ENCODE measurements at regions of chr4 and their contacts with region 1.

Region 1: GRCh38 chr4:781493-782216 is 44.3 kb downstream of the CPLX1 start:
- DNase-seq: peak; percentile 99 to 100
- H3K4me3 ChIP-seq: peak overlapping the region; percentile 85 to 95
- H3K27ac ChIP-seq: peak overlapping the region; percentile 85 to 88
- H3K4me1 ChIP-seq: peaks cover 4 to 49% (median 33%) of the 10 kb centered on the region in 4 donors
- H3K27me3 ChIP-seq: peaks cover 5 to 25% of the 10 kb centered on the region in 2 donors
- CTCF ChIP-seq: no peak

Region 2: GRCh38 chr4:674172-675035 is 107.3 kb before region 1 on chr4 and contains the starts of genes ATP5ME and MYL5:
- intact Hi-C with region 1: loop called (anchors 10 kb)
- DNase-seq: peak; percentile 95 to 98
- H3K4me3 ChIP-seq: peak within 1 kb of the TSS; percentile 94 to 97
- H3K27ac ChIP-seq: peak within 1 kb of the TSS; percentile 96 to 97
- H3K4me1 ChIP-seq: peaks cover 0 to 34% (median 17%) of the 10 kb centered on the region in 4 donors
- H3K27me3 ChIP-seq: peaks cover 0 to 33% of the 10 kb centered on the region in 2 donors
- CTCF ChIP-seq: peak; percentile 87 to 89

Region 3: GRCh38 chr4:705278-706082 is 76.2 kb before region 1 on chr4 and contains the start of gene PCGF3:
- intact Hi-C with region 1: loop called (anchors 10 kb)
- DNase-seq: peak; percentile 94 to 97
- H3K4me3 ChIP-seq: peak within 1 kb of the TSS; percentile 92 to 99
- H3K27ac ChIP-seq: peak within 1 kb of the TSS; percentile 86 to 93
- H3K4me1 ChIP-seq: peaks cover 0 to 35% (median 26%) of the 10 kb centered on the region in 4 donors
- H3K27me3 ChIP-seq: no peaks in the 10 kb centered on the region
- CTCF ChIP-seq: no peak

Region 4: GRCh38 chr4:931960-932712 is 150.5 kb after region 1 on chr4 and contains the starts of genes GAK and TMEM175:
- intact Hi-C with region 1: loop called (anchors 10 kb)
- DNase-seq: peak; percentile 94 to 97
- H3K4me3 ChIP-seq: peak within 1 kb of the TSS; percentile 99 to 100
- H3K27ac ChIP-seq: peak within 1 kb of the TSS; percentile 86 to 95
- H3K4me1 ChIP-seq: peaks cover 0 to 50% (median 34%) of the 10 kb centered on the region in 4 donors
- H3K27me3 ChIP-seq: no peaks in the 10 kb centered on the region
- CTCF ChIP-seq: peak in 1 of 2 experiments; percentile 20

Region 5: DNA sequence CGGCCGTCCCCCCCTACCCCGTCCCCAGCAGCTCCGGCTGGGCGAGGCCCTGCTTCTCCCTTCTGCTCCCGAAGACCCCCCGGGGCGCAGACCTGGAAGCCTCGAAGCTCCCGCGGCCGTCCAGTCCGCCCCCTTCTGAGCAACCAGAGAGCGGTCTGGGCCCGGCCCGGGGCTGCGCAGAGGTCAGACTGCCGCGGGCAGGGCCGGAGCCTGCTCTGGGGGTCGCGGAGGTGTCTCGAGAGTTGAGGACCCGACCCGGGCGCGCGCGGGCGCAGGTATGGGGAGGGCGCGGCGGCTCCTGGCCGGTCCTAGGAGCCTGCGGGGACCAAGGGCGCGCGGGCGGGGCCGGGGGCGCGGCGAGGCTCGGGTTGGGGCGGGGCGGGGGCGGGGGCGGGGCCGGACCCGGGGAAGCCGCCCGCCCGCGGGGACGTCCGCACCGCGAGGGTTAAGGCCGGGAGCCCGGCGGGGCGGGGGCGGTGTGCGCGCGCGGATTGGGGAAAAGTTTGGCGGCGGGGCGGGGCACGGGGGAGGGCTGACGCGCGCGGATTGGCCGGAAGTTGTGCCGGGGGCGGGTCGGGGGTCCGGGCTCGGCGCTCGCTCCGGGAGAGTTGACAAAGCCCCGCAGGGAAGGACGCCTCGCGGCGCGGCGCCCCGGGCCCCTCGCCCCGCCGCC is 229.5 kb after region 1 on chr4 and contains the start of gene FGFRL1:
- intact Hi-C with region 1: loop called (anchors 10 kb)
- DNase-seq: peak; percentile 88 to 95
- H3K4me3 ChIP-seq: peak within 1 kb of the TSS; percentile 65 to 66
- H3K27ac ChIP-seq: peak within 1 kb of the TSS; percentile 69 to 84
- H3K4me1 ChIP-seq: peaks cover 0 to 43% (median 32%) of the 10 kb centered on the region in 4 donors
- H3K27me3 ChIP-seq: peaks cover 0 to 23% of the 10 kb centered on the region in 2 donors
- CTCF ChIP-seq: no peak

Measured in tibial artery (tissue), 4 donors.